IMR-90 (cell line): ENCODE measurements at regions of chr21 and their contacts with region 1.

Region 1: DNA sequence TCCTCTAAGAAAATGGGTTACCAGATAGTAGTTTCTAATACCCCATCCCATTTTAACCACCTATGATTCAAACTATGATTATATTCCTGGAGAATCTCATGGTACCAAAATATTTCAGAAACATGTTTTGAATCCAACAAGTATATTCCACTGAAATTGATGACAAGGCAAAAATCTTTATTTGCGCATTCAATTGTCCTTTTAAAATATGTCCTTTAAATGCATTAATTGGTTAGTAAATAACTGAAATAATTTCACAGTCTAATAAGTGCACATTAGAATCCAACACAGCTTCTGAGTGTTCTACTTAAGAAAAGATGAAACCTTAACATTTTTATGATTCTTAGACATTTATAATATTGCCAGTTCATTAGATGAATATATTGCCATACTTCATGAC is 356.6 kb downstream of the SETD4 start:
- DNase-seq: no peak
- ATAC-seq: no peak
- H3K4me3 ChIP-seq: no peak overlapping the region
- H3K27ac ChIP-seq: no peak overlapping the region
- H3K4me1 ChIP-seq: no peaks in the 10 kb centered on the region
- H3K27me3 ChIP-seq: peaks cover 21% of the 10 kb centered on the region
- CTCF ChIP-seq: no peak
- POLR2A ChIP-seq: no peak
- RAD21 ChIP-seq: no peak

Region 2: DNA sequence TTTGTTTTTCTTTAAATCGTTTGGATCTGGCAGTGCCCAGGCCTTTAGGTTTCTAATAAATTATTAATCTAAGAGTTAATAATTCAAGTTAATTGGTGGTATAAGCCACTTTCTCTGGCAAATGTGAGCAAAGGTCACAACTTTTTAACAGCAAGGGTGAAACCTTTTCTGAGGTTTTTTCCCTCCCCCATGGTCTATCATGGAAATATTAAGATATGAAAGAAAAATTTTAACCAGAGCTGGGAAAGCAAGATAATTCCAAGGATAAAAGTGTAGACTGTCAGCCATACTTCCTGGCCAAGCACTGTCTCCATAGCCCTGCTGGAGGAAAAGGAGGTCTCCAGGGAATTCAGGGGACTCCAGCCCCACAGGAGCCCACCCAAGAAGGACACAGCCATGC is 15.4 kb after region 1 on chr21:
- CTCF ChIA-PET with region 1: no interaction called
- POLR2A ChIA-PET with region 1: interaction called, 16 read pairs
- dilution Hi-C with region 1: no loop called
- in situ Hi-C with region 1: no loop called
- intact Hi-C with region 1: no loop called
- DNase-seq: no peak
- ATAC-seq: no peak
- H3K4me3 ChIP-seq: no peak overlapping the region
- H3K27ac ChIP-seq: no peak overlapping the region
- H3K4me1 ChIP-seq: no peaks in the 10 kb centered on the region
- H3K27me3 ChIP-seq: peaks cover 24% of the 10 kb centered on the region
- CTCF ChIP-seq: no peak
- POLR2A ChIP-seq: no peak
- RAD21 ChIP-seq: no peak

Region 3: GRCh38 chr21:35753308-35753707 is 49.6 kb after region 1 on chr21:
- CTCF ChIA-PET with region 1: no interaction called
- POLR2A ChIA-PET with region 1: no interaction called
- dilution Hi-C with region 1: no loop called
- in situ Hi-C with region 1: no loop called
- intact Hi-C with region 1: no loop called
- DNase-seq: no peak
- ATAC-seq: no peak
- H3K4me3 ChIP-seq: no peak overlapping the region
- H3K27ac ChIP-seq: no peak overlapping the region
- H3K4me1 ChIP-seq: no peaks in the 10 kb centered on the region
- H3K27me3 ChIP-seq: peaks cover 16% of the 10 kb centered on the region
- CTCF ChIP-seq: no peak
- POLR2A ChIP-seq: no peak
- RAD21 ChIP-seq: no peak